ENCODE measurements at regions of chr6 and their contacts with region 1.

Region 1: GRCh38 chr6:45094831-45095230 is 233.3 kb upstream of the RUNX2 start:
- DNase-seq: no peak
- ATAC-seq: no peak
- H3K4me3 ChIP-seq: no peak overlapping the region
- H3K4me3 Mint-ChIP-seq: no peak overlapping the region
- H3K27ac ChIP-seq: no peak overlapping the region
- H3K27ac Mint-ChIP-seq: no peak overlapping the region
- H3K4me1 ChIP-seq: no peaks in the 10 kb centered on the region
- H3K4me1 Mint-ChIP-seq: no peaks in the 10 kb centered on the region
- H3K27me3 ChIP-seq: no peaks in the 10 kb centered on the region
- H3K27me3 Mint-ChIP-seq: no peaks in the 10 kb centered on the region
- CTCF ChIP-seq: no peak

Region 2: GRCh38 chr6:45169815-45170214 is 75.0 kb after region 1 on chr6:
- CTCF ChIA-PET with region 1: no interaction called
- POLR2A ChIA-PET with region 1: no interaction called
- intact Hi-C with region 1: loop called in 1 of 2 experiments (anchors 5 kb)
- DNase-seq: no peak
- ATAC-seq: no peak
- H3K4me3 ChIP-seq: no peak overlapping the region
- H3K4me3 Mint-ChIP-seq: no peak overlapping the region
- H3K27ac ChIP-seq: no peak overlapping the region
- H3K27ac Mint-ChIP-seq: no peak overlapping the region
- H3K4me1 ChIP-seq: peaks cover 4% of the 10 kb centered on the region
- H3K4me1 Mint-ChIP-seq: peaks cover 20% of the 10 kb centered on the region
- H3K27me3 ChIP-seq: no peaks in the 10 kb centered on the region
- H3K27me3 Mint-ChIP-seq: no peaks in the 10 kb centered on the region
- CTCF ChIP-seq: no peak